Endothelial cell of umbilical vein (primary cell): ENCODE measurements at regions of chr2 and their contacts with region 1.

Region 1: DNA sequence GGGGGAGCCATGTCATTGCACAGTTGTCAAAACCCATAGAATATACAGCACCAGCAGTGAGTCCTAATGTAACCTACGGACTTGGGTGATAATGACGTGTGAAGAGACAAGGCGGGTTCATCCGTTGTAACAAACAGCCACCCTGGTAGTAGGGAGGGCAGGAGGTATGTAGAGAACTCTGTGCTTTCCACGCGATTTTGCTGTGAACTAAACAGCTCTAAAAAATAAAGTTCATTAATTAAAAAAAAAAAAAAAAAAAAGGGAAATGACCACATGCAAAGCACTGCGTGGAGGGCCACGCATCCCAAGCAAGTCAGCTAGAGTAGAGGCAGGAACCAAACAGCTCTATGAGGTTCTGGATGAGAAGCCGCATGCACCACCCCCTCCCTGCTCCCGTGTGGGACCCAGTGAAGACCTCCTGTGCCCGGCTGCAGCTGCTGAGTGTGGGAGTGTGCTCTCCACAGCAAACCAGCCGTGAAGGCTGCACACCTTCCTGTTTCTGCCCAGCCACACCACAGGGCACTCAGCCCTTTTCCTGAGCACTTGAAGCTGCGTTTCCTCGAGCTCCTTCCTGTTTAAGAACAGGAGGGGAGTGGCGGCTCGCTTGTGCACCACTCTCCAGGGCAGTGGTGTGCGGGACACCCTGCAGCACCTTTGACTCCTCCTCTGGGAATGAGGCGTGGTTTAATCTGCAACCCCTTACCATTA is 65.6 kb downstream of the ODC1 start:
- DNase-seq: peak; percentile 70
- H3K4me3 ChIP-seq: no peak overlapping the region
- H3K27ac ChIP-seq: no peak overlapping the region
- H3K4me1 ChIP-seq: peaks cover 22% of the 10 kb centered on the region
- H3K27me3 ChIP-seq: no peaks in the 10 kb centered on the region
- CTCF ChIP-seq: no peak
- POLR2A ChIP-seq: no peak

Region 2: DNA sequence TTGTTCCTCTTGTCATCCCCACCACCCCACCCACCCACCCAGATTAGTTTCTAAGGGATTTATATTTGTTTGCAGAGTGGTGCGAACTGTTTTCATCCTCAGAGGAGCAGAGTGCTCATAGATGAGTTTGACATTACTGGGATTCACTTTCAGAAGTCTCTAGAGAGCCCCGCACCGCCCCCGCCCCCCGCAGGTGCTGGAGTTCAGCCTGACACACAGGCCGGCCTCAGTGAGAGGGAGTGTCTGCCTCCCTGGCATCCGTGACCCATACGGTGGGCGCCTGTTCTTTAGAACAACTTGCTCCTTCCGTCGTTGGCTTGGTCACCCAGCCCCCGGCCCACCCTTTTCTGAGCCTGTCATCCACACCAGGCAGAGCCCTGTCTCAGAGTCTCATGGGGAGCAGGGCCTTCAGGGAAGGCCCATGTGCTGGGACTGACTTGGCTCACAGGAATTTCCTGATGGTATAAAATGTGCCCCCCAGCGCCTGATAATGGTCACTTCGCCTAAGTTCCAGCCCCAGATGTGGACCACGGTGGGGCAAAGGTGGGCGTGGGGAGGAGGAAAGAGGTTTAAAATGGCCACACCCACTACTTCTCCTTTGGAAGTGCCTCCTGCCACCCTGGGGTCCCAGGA is 35.5 kb before region 1 on chr2:
- CTCF ChIA-PET with region 1: interaction called, 11 read pairs
- POLR2A ChIA-PET with region 1: no interaction called
- dilution Hi-C with region 1: no loop called
- intact Hi-C with region 1: no loop called
- DNase-seq: peak; percentile 23
- H3K4me3 ChIP-seq: no peak overlapping the region
- H3K27ac ChIP-seq: peak overlapping the region; percentile 46
- H3K4me1 ChIP-seq: peaks cover 31% of the 10 kb centered on the region
- H3K27me3 ChIP-seq: no peaks in the 10 kb centered on the region
- CTCF ChIP-seq: peak in 1 of 2 donors; percentile 15
- POLR2A ChIP-seq: no peak